ENCODE measurements at regions of chr2 and their contacts with region 1.

Region 1: GRCh38 chr2:154623819-154624218 is 74.7 kb upstream of the KCNJ3 start:
- ATAC-seq: peak in 7 of 8 experiments; percentile 49 to 72 (median 68)
- H3K4me3 ChIP-seq: no peak overlapping the region
- H3K27ac ChIP-seq: no peak overlapping the region
- H3K4me1 ChIP-seq: no peaks in the 10 kb centered on the region

Region 2: DNA sequence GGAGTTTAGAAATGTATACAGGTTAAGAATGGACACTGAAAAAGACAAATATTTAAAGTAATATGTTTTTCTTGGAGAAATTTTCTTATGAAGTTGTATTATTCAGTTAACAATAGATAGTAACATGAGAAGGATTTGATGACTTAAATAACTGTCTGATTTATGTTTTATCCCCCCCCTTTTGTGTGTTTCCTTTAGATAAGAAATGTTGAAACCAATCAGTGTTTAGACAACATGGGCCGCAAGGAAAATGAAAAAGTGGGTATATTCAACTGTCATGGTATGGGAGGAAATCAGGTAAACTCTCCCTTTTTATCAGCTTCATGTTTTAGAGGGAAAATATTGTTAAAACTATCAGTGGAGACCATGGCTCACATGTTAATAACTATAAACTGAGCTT is 215.0 kb before region 1 on chr2:
- in situ Hi-C with region 1: no loop called
- ATAC-seq: no peak
- H3K4me3 ChIP-seq: no peak overlapping the region
- H3K27ac ChIP-seq: no peak overlapping the region
- H3K4me1 ChIP-seq: no peaks in the 10 kb centered on the region

Region 3: DNA sequence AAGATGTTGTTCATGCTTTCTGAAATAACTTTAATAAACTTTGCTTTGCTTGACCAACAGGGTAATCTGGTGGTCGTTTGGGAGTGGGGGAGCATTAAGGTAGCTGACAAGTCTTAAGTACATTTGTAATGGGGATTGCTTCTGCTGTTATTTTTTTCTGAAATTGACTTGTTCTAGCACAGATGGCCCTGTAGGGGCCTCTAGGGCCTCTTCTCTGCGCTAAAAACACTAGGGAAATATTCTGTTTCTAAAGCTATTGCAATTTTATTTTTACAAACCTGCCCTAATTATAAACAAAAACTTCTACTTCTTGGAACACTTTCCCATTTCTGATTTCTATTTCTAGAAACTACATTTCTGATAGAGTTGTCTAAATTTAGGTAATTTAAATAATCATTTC is 116.6 kb before region 1 on chr2:
- in situ Hi-C with region 1: loop called in 1 of 9 experiments (anchors 25 kb)
- ATAC-seq: no peak
- H3K4me3 ChIP-seq: no peak overlapping the region
- H3K27ac ChIP-seq: no peak overlapping the region
- H3K4me1 ChIP-seq: no peaks in the 10 kb centered on the region

Region 4: GRCh38 chr2:154740361-154740760 is 116.5 kb after region 1 on chr2:
- in situ Hi-C with region 1: no loop called
- ATAC-seq: no peak
- H3K4me3 ChIP-seq: no peak overlapping the region
- H3K27ac ChIP-seq: no peak overlapping the region
- H3K4me1 ChIP-seq: no peaks in the 10 kb centered on the region